G401 (cell line): ENCODE measurements at regions of chr13 and their contacts with region 1.

Region 1: GRCh38 chr13:91167706-91168385 is 179.6 kb upstream of the MIR17HG start:
- DNase-seq: no peak

Region 2: GRCh38 chr13:91226051-91226450 is 58.2 kb after region 1 on chr13:
- in situ Hi-C with region 1: no loop called
- DNase-seq: no peak

Region 3: GRCh38 chr13:91238036-91238435 is 70.2 kb after region 1 on chr13:
- in situ Hi-C with region 1: loop called (anchors 5 kb)
- DNase-seq: no peak